ENCODE measurements at regions of chr5 and their contacts with region 1.

Region 1: GRCh38 chr5:81751009-81751835 is at the start of gene SSBP2:
- DNase-seq: peak; percentile 99
- ATAC-seq: peak; percentile 91
- total RNA-seq, gene SSBP2: 13.3 to 25.7 TPM

Region 2: DNA sequence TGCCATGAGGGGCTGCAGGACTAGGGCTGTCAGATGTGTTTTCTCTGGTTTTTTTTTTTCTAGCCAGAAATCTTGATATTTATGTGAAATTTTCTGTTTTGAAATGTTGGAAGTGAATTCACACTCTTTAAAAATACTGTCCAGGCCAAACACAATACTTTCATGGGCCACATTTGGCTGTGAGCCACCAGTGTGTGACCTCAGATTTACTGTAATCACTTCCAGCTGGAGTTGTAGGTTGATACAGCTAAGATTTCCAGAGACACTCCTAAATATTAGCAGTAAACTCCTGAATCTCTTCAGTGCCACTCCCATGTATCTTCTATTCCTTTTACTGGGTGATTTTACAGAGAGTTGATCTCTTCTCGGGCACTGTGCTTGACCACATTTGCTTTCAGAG is 610.3 kb before region 1 on chr5:
- intact Hi-C with region 1: no loop called
- DNase-seq: peak in 1 of 2 donors; percentile 8
- ATAC-seq: no peak

Region 3: GRCh38 chr5:81409896-81410295 is 341.3 kb before region 1 on chr5:
- intact Hi-C with region 1: no loop called
- DNase-seq: no peak
- ATAC-seq: no peak

Region 4: DNA sequence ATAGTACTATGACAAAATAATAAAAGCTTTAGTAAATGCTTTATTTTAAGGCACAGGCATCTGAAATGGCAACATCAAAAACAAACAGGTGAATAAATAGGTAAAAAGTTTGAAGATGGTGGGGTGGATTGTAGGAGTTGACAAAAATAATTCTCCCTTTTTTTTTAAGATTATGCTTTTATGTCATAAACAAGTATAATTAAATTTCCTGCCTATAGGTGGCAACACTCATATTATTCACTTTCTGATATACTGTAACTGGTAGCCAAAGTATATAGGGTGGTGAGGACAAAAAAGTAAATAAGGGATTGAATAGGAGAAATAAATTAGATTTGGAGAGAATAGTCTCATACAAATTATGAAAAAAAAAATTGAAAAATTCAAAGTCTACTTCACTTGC is 237.2 kb before region 1 on chr5:
- intact Hi-C with region 1: loop called in 1 of 2 experiments (anchors 10 kb)
- DNase-seq: no peak
- ATAC-seq: no peak

Region 5: DNA sequence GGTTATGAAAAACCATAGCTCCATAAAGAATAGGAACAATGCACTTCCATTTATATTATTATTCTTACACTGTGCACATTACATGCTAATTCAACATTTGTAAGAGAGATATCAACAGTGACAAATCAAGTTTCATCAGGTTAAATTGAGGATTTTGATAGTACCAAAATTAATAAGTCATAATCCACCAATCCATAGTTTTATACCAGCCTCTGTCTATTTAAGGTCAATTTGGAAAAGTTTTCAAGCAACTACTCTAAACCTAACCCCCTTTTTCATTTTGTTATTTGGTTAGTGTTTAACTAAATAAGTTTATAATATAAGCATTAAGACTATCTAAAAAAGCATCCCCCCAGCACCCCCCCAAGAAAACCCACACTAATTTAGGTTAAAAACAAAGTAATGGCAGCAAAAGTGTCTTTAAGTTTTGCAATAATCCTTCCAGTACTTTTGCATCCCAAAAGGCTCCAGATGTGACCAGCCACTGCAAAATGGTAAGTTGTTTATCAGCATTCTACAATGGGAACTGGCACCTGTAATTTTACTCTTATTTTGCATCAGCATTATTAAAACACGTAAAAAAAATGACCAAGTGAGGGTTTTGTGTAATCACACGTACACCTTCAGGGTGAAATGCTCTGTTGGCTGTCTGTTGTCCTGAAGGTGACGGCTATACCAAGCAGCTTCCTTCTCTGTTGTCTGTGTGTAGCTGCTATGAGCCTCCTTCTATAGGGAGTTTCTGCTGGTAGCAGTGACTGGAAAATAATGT is 36.4 kb after region 1 on chr5:
- intact Hi-C with region 1: loop called in 1 of 2 experiments (anchors 5 kb)
- DNase-seq: peak; percentile 41 to 50
- ATAC-seq: no peak

Region 6: DNA sequence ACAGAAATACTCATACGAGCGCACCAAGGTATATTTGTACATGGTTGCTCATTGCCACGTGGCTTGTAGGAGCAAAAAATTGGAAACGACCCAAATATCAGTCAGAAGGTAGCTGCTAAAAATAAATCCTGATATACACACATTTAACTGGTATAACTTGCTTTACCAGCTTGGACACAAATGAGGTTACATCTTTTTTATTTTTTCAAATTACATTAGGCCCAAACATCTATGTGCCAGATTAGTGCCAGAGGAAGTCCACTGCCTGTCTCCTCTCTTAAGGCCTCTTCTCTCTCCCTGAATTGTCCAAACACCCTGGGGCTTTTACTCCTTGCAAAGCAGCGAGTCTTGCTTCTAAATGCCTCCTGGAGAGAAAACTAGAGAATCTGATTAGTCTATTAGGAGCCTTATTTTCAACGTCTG is 91.7 kb after region 1 on chr5:
- intact Hi-C with region 1: no loop called
- DNase-seq: no peak
- ATAC-seq: no peak